ENCODE measurements at regions of chr22 and their contacts with region 1.

Region 1: DNA sequence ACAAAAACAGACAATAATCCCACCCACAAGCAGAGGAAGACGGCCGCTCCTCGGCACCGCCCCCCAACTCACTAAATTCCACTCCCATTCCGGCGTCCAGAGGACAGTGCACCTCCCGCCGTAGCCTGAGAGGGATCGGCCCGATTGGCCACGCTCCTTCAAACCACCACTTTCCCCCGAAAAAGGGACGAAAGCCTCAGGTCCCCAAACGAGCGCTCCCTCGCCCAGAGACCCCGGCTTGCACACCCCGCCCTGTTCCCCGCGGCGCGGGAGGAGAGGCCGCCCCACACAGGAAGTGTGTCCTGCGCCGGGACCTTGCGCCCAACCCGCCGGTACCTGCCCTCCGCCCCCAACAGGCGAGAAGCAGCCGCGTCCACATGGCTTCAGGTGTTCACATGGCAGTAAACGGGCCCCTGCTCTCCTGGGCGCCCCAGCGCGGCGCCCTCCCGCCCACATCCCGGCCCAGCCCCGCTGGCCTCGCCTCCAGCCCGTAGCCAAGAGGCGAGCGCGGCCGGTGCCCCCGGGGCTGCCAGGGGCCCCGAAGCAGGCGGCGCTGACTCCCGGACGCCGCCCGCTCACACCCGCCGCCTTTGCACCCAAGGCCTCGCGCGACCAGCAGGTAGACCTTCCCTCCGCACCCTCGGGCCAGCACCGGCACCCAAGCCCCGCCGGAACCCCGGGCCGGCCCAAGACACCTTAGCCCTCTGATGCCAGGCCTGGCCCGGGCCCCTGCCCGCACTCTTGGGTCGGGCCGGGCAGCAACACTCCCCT is 861 bp downstream of the TCF20 start:
- DNase-seq: peak; percentile 67
- H3K4me3 Mint-ChIP-seq: peak overlapping the region; percentile 90
- H3K27ac Mint-ChIP-seq: peak overlapping the region; percentile 87
- H3K4me1 Mint-ChIP-seq: peaks cover 37% of the 10 kb centered on the region
- H3K27me3 Mint-ChIP-seq: no peaks in the 10 kb centered on the region

Region 2: GRCh38 chr22:42180349-42180842 is 89.2 kb before region 1 on chr22:
- intact Hi-C with region 1: loop called (anchors 5 kb)
- DNase-seq: peak; percentile 32
- H3K4me3 Mint-ChIP-seq: peak overlapping the region; percentile 12
- H3K27ac Mint-ChIP-seq: peak overlapping the region; percentile 50
- H3K4me1 Mint-ChIP-seq: peaks cover 84% of the 10 kb centered on the region
- H3K27me3 Mint-ChIP-seq: no peaks in the 10 kb centered on the region

Region 3: DNA sequence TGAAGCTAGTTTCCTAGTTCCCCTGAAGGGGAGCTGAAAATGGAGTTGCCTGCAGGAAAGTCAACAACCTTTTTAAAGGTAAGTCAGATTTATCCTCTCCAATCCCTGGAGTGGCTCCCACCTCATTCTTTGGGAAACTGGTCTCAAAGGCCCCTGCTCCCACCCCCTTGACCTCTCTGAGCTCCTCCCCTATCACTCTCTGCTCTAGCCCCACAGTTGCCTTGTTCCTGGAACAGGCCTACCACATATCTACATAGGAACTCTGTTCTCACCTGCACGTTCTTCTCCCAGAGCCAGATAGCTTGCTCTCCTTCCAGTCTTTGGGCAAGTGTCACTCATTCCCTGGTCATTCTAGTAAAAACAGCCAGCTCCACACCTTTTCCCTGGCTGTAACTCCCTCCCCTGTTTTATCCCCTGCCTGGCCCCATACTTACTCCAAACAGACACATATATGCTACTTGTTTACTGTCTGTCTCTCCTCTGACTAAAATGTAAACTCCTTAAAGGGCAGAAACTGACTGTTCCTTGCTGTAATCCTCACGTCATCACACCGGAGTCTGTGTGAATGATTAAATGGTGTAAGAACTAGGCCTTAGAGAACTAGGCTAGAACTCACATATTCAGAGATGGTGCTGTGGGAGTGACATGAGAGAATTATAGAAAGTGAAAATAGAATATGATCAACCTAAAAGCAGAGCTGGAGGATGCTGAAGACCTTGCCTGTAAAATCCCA is 52.4 kb before region 1 on chr22:
- intact Hi-C with region 1: loop called (anchors 2 kb)
- DNase-seq: no peak
- H3K4me3 Mint-ChIP-seq: peak overlapping the region; percentile 2
- H3K27ac Mint-ChIP-seq: peak overlapping the region; percentile 90
- H3K4me1 Mint-ChIP-seq: peaks cover 29% of the 10 kb centered on the region
- H3K27me3 Mint-ChIP-seq: no peaks in the 10 kb centered on the region

Region 4: GRCh38 chr22:42623301-42623751 is 353.7 kb after region 1 on chr22:
- intact Hi-C with region 1: no loop called
- DNase-seq: no peak
- H3K4me3 Mint-ChIP-seq: no peak overlapping the region
- H3K27ac Mint-ChIP-seq: no peak overlapping the region
- H3K4me1 Mint-ChIP-seq: peaks cover 6% of the 10 kb centered on the region
- H3K27me3 Mint-ChIP-seq: no peaks in the 10 kb centered on the region

Measured in activated T-helper 1 cell treated with anti-CD3 and anti-CD28 coated beads, Interleukin-12 subunit alpha, Interleukin-12 subunit beta, Interleukin-2, Interleukin-4 antibody, amounts not matched to agents 30 ng/mL and 10 ng/mL and 1 ng/mL, durations not matched to agents 14 hours and 24 hours and 36 hours (primary cell).